ENCODE measurements at regions of chr7 and their contacts with region 1.

Region 1: GRCh38 chr7:128020159-128020558 is 11.1 kb downstream of the LRRC4 start:
- DNase-seq: no peak

Region 2: DNA sequence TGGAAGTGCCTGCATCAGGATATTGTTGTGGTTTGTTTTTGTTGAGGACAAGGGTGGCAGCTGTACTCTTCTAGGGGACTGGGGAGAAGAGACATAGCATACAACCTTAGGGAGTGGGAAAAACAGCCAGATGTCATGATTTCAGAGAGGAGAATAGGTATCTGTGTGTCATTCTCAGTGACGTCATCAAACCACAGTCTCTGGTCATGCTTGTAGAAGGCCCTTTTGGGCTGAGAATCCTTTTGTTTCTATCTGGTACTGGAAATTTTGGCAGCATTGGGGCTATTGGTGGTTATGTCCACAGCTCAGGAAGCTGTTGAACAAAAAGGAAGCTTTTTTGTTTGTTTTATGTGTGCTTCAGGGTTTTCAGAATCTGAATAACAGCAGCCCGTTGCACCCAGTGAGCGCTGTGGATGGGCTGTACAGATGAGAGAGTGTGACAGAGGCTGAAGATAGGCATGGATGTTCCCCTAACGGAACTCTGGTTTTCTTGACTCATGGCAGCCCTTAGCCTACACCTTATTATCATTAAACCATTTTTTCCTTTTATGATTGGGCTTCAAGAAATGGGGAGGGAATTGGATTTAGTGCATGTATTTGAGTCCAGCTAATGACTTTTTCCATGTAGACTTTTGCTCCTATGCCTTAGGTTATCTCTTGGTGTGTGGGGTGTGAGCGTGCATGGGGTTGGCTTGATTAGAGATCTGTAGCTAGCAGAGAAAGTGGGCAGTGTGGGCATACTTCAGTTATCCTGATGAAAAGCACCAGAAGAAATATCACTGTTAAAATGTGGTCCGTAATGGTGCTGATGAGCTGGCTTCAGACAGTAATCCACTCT is 302.4 kb before region 1 on chr7:
- intact Hi-C with region 1: loop called (anchors 10 kb)
- DNase-seq: no peak

Region 3: GRCh38 chr7:127943541-127944521 is 76.3 kb before region 1 on chr7:
- intact Hi-C with region 1: loop called (anchors 10 kb)
- DNase-seq: peak; percentile 51 to 92 (median 78)

Measured in head of caudate nucleus (tissue), 42 donors.